ENCODE measurements at regions of chr17 and their contacts with region 1.

Region 1: GRCh38 chr17:11296994-11297393 is 56.0 kb downstream of the SHISA6 start:
- DNase-seq: no peak
- H3K4me3 ChIP-seq: no peak overlapping the region
- H3K27ac ChIP-seq: no peak overlapping the region
- H3K4me1 ChIP-seq: no peaks in the 10 kb centered on the region
- H3K27me3 ChIP-seq: no peaks in the 10 kb centered on the region
- CTCF ChIP-seq: peak in 2 of 3 experiments; percentile 45 to 66; a peak in 3 of 4 replicates
- EP300 ChIP-seq: no peak
- POLR2A ChIP-seq: no peak
- RAD21 ChIP-seq: peak; percentile 62 to 72

Region 2: DNA sequence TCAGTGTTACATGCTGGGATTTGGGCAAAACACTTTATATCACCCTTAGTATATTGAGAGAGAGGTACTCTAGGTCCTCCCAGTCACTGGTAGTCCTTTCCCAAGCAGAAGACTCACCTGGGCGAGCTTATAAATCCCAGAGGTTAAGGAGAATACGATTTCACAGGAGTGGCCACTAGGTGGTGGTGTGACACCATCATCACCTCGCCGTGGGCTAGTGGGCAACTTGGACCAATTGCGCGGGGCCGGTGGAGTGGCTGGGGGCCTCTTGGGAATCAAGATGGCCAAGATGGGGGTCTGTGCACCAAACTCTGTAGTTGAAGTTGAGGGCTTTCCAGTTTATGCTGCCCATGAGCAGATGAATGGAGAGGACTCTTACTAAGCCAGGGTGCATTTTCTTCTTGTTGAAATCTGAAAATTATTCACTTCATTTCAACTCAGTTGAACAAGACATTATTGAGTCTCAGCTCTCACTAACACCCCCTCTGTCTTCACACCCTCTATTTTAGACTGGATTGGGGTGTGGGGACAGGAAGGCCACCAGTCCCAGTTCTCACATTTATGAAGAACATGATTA is 420.9 kb before region 1 on chr17:
- CTCF ChIA-PET with region 1: interaction called, 48 read pairs
- POLR2A ChIA-PET with region 1: no interaction called
- DNase-seq: peak in 1 of 2 experiments; percentile 88
- H3K4me3 ChIP-seq: no peak overlapping the region
- H3K27ac ChIP-seq: no peak overlapping the region
- H3K4me1 ChIP-seq: no peaks in the 10 kb centered on the region
- H3K27me3 ChIP-seq: no peaks in the 10 kb centered on the region
- CTCF ChIP-seq: peak; percentile 74 to 83 (median 75)
- EP300 ChIP-seq: no peak
- POLR2A ChIP-seq: no peak
- RAD21 ChIP-seq: peak; percentile 91 to 96

Region 3: DNA sequence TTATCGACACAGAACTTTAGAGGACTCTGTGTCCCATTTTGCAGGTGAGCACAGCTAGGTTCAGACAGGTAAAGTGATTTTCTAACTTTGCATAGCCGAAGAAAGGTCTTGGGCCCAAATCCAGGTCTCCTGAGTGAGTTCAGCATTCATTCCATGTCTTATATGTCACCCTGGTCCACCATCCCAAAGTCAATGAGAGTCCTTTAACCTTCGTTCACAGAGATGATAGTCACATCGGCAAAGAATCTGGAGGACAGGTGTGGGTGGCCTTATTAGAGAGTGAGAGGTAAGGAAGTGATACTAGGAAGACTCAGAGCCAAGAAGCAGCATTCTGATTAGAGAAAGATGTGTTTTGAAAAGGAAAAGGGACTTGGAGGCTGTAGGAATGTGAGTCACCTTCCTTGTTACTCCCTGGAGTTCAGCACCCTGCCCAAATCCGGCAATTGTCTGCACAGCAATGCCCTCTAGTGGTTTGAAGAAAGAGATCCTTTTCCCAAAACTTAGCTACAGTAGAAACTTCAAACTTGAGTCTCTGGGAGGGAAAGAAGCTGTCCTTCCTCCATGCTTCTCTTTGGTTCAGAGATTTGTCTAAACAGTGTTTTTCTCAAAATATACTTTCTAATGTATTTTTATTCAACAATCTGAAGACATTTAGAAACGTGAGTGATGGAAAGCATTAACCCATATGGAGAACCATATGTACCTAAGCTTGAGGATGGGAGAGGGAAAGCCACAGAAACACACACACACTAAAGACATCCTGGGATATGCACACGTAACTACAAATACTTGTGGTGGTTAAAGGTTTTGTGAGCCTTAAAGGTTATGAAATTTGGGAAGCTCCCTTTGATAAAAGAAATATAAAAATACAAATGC is 152.4 kb before region 1 on chr17:
- CTCF ChIA-PET with region 1: interaction called, 25 read pairs
- POLR2A ChIA-PET with region 1: no interaction called
- DNase-seq: peak; percentile 33 to 49
- H3K4me3 ChIP-seq: no peak overlapping the region
- H3K27ac ChIP-seq: no peak overlapping the region
- H3K4me1 ChIP-seq: no peaks in the 10 kb centered on the region
- H3K27me3 ChIP-seq: no peaks in the 10 kb centered on the region; a peak in 1 of 7 replicates
- CTCF ChIP-seq: peak; percentile 35 to 80 (median 78)
- EP300 ChIP-seq: no peak
- POLR2A ChIP-seq: no peak
- RAD21 ChIP-seq: peak; percentile 97

Region 4: GRCh38 chr17:11264183-11264871 is 32.7 kb before region 1 on chr17:
- CTCF ChIA-PET with region 1: interaction called, 17 read pairs
- POLR2A ChIA-PET with region 1: no interaction called
- DNase-seq: no peak
- H3K4me3 ChIP-seq: no peak overlapping the region
- H3K27ac ChIP-seq: no peak overlapping the region
- H3K4me1 ChIP-seq: peaks cover 0 to 3% (median 2%) of the 10 kb centered on the region in 4 experiments; a peak in 1 of 7 replicates
- H3K27me3 ChIP-seq: no peaks in the 10 kb centered on the region
- CTCF ChIP-seq: peak in 2 of 3 experiments; percentile 26 to 57; a peak in 1 of 4 replicates
- EP300 ChIP-seq: no peak
- POLR2A ChIP-seq: no peak
- RAD21 ChIP-seq: peak; percentile 37 to 42; a peak in 3 of 4 replicates

Region 5: DNA sequence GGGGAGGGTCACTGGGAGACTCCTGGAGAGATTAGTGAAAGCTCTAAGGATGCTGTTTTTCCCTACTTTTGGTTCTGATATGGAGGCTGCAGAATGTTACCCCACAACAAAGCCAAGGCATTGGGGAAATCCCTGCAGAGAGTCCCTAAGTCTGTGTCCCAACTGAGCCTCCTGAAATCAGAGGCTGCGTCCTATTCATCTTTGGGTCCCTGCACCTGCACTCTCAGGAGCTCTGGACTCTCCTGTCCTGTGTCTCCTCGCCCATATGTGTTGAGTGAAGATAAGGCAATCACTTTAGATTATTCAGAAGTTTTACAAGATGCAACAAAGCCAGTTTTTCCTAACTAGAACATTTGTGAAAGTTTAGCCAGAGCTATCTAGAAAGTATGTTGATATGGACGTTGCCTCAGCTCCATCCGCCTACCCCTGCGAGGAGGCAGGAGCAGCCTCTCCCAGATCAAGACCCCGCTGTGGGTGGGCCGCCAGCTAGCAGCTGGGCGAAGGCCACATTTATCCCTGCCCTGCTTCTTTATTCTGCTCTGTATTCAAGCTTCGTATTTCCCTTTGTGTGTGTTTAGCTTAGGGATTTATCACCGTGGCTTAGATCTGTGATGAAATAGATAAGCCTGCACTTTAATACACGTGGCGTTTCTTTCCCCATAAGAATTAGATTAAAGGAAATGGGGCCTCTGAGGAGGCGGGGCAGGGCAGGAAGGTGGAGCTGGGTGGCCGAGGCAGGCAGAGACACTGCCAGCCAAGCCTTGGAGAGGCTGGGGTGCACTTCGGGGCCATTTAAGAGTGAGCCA is 18.6 kb before region 1 on chr17:
- CTCF ChIA-PET with region 1: interaction called, 12 read pairs
- POLR2A ChIA-PET with region 1: no interaction called
- DNase-seq: no peak
- H3K4me3 ChIP-seq: no peak overlapping the region
- H3K27ac ChIP-seq: no peak overlapping the region
- H3K4me1 ChIP-seq: peaks cover 0 to 2% (median under 1%) of the 10 kb centered on the region in 4 experiments; a peak in 2 of 7 replicates
- H3K27me3 ChIP-seq: no peaks in the 10 kb centered on the region
- CTCF ChIP-seq: no peak
- EP300 ChIP-seq: no peak
- POLR2A ChIP-seq: no peak
- RAD21 ChIP-seq: no peak

Region 6: DNA sequence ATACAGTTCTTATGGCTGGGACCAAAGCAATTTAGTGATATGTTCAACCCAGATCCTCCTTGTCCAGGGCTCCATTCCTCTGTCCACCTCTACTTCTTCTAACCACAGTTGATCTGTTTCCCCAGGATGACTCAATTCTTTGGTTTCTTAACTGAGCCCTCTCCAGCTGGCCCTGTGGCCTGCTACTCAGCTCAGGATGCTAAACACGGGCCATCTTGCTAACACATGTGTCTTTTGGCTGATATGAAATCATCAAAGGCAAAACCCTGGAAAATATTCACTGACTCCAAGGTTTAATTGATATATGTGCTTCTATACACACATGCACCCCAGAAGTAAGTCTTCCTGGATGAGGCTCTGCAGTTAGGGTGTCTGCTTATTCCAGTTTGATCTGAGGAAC is 12.2 kb before region 1 on chr17:
- CTCF ChIA-PET with region 1: interaction called, 25 read pairs
- POLR2A ChIA-PET with region 1: interaction called, 3 read pairs
- DNase-seq: no peak
- H3K4me3 ChIP-seq: no peak overlapping the region
- H3K27ac ChIP-seq: no peak overlapping the region
- H3K4me1 ChIP-seq: peaks cover 0 to 2% (median 0%) of the 10 kb centered on the region in 4 experiments; a peak in 2 of 7 replicates
- H3K27me3 ChIP-seq: no peaks in the 10 kb centered on the region
- CTCF ChIP-seq: no peak
- EP300 ChIP-seq: no peak
- POLR2A ChIP-seq: no peak
- RAD21 ChIP-seq: no peak

Region 7: GRCh38 chr17:11308531-11308930 is 11.5 kb after region 1 on chr17:
- CTCF ChIA-PET with region 1: interaction called, 30 read pairs
- POLR2A ChIA-PET with region 1: no interaction called
- DNase-seq: no peak
- H3K4me3 ChIP-seq: no peak overlapping the region
- H3K27ac ChIP-seq: no peak overlapping the region
- H3K4me1 ChIP-seq: peaks cover 2 to 8% (median 4%) of the 10 kb centered on the region in 4 experiments; a peak in 4 of 7 replicates
- H3K27me3 ChIP-seq: no peaks in the 10 kb centered on the region
- CTCF ChIP-seq: no peak
- EP300 ChIP-seq: no peak
- POLR2A ChIP-seq: no peak
- RAD21 ChIP-seq: no peak